ENCODE measurements at regions of chr11 and their contacts with region 1.

Region 1: GRCh38 chr11:84714316-84714780 is 912.8 kb downstream of the DLG2 start:
- DNase-seq: peak; percentile 65
- H3K4me3 Mint-ChIP-seq: no peak overlapping the region
- H3K27ac Mint-ChIP-seq: no peak overlapping the region
- H3K4me1 Mint-ChIP-seq: no peaks in the 10 kb centered on the region
- H3K27me3 Mint-ChIP-seq: peaks cover 2% of the 10 kb centered on the region
- CTCF ChIP-seq: peak; percentile 40

Region 2: DNA sequence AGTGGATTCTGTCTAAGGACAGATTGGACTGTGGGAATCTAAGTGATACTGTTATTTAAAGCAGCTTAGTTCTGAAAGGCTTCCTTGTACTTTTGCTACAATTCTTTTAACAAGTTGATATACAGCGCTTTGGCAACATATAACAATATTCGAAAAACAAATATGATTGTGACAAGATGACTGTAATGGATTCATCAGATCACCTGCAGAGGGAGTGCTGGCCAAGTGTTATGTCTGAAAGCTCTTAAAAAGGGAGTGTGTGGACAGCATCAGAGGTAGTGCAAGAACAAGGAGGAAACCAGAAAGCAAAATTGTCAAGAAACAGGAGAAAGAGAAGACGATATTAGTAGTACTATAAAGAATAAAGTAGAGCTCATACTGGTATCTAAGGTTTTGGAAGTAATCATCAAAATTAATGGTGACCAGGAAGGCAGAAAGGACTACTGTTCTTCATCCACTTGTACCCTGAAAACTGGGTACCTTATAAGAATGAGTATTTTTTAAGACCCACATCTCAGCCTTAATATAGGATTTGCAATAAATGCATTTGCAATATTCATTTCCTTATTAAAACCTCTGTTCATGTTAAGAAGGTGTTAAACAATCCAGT is 316.2 kb before region 1 on chr11:
- CTCF ChIA-PET with region 1: no interaction called
- intact Hi-C with region 1: loop called (anchors 10 kb)
- DNase-seq: peak; percentile 7
- H3K4me3 Mint-ChIP-seq: no peak overlapping the region
- H3K27ac Mint-ChIP-seq: no peak overlapping the region
- H3K4me1 Mint-ChIP-seq: no peaks in the 10 kb centered on the region
- H3K27me3 Mint-ChIP-seq: peaks cover 2% of the 10 kb centered on the region
- CTCF ChIP-seq: no peak

Region 3: DNA sequence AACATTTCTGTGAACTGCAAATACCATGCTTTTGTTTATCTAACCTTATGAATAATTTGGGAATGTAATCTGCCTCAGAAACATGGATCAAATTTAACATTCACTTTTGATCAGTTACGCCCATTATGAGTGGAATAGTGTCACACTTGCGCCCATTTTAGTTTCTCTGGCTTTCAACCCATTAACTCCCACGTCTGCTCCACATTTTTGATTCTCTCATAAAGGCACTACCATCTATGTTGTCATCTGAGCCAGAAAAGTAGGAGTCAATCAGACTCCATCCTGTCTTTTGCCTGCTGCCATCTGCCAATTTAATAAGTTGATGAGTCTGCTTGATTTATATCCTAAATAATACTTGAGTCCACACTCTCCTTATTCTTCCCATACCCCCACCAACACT is 177.9 kb before region 1 on chr11:
- CTCF ChIA-PET with region 1: no interaction called
- intact Hi-C with region 1: no loop called
- DNase-seq: no peak
- H3K4me3 Mint-ChIP-seq: no peak overlapping the region
- H3K27ac Mint-ChIP-seq: no peak overlapping the region
- H3K4me1 Mint-ChIP-seq: no peaks in the 10 kb centered on the region
- H3K27me3 Mint-ChIP-seq: peaks cover 16% of the 10 kb centered on the region
- CTCF ChIP-seq: no peak

Region 4: GRCh38 chr11:84558085-84558905 is 156.1 kb before region 1 on chr11:
- CTCF ChIA-PET with region 1: no interaction called
- intact Hi-C with region 1: loop called (anchors 1 kb)
- DNase-seq: peak; percentile 20
- H3K4me3 Mint-ChIP-seq: no peak overlapping the region
- H3K27ac Mint-ChIP-seq: no peak overlapping the region
- H3K4me1 Mint-ChIP-seq: peaks cover 19% of the 10 kb centered on the region
- H3K27me3 Mint-ChIP-seq: peaks cover 4% of the 10 kb centered on the region
- CTCF ChIP-seq: no peak

Measured in Calu3 (cell line).